Activated CD4-positive, alpha-beta T cell treated with anti-CD3 and anti-CD28 coated beads for 36 hours (primary cell): ENCODE measurements at regions of chr6 and their contacts with region 1.

Region 1: DNA sequence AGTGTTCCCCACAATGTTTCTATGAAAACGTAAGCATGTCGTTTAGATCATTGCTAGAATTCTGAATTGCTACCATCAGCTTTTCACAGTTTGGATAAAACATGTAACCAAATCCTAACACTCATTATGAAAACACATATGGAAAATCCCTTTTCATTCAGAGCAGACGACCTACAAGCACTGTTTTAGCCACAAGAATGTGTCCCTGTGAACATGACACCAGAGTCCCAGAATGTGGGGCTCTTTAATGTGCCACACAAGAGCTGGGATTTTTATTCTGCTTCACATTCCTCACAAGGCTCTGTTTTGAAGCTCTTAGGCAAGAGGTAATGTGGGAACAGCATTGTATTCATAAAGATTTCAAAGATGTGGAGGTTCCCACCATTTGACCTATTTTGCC is 141.1 kb upstream of the CITED2 start:
- DNase-seq: no peak
- ATAC-seq: peak; percentile 79
- H3K4me3 Mint-ChIP-seq: no peak overlapping the region
- H3K27ac Mint-ChIP-seq: peak overlapping the region; percentile 76
- H3K4me1 Mint-ChIP-seq: peaks cover 21% of the 10 kb centered on the region
- H3K27me3 Mint-ChIP-seq: no peaks in the 10 kb centered on the region

Region 2: DNA sequence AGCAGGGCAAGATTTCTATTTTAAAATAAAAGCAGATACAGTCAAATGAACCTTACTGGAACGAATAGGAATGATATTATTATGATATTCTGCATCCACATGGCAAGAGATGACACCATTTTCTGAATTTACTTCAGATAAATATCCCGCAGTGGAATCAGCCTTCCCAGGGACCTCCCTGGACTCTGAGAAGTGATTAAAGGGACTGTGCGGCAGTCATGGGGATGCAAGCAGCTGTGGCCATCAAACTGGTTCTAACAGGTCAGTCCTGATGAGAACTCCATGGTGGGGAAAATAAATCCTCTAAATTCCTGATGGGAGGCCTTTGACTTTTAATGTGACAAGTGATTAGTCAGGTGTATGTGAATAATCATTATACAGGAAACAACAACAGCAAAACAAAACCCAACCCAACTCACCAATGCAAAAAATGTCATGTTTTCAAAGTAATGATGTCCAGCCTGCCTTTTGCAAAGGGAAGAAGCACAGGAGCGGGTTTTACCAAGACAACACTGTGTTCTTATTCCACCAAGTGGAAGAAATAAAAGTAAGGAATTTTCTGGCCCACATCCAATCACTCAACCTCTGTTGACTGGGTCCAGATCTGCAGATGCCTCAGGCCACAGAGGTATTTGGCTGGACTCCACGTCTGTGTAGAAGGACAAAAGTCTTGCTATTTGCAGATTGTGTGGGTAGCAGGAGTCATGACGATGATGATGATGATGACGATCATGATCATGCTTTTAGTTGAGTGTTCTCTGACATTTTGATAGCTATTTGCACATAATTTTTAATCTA is 79.1 kb before region 1 on chr6:
- CTCF ChIA-PET with region 1: no interaction called
- POLR2A ChIA-PET with region 1: no interaction called
- intact Hi-C with region 1: no loop called
- DNase-seq: no peak
- ATAC-seq: no peak
- H3K4me3 Mint-ChIP-seq: no peak overlapping the region
- H3K27ac Mint-ChIP-seq: no peak overlapping the region
- H3K4me1 Mint-ChIP-seq: no peaks in the 10 kb centered on the region
- H3K27me3 Mint-ChIP-seq: no peaks in the 10 kb centered on the region

Region 3: DNA sequence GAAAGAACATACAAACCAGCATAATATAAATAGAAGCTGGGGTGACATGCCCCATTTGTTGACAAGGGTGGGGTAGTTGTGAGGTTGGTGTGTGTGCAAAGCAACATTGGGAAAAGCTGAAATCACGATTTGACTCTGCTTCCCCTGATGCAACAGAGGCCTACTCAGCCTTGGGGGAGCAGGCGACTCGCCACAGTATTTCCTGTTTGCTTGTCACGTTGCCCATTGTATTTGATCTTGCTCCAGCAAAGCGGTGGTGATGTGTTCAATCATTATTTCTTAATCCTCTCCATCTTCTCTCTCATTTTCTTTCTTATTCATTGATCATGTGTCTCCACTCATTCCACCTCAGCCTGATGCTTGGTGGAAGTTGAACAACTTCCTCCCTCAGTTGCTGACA is 24.8 kb after region 1 on chr6:
- CTCF ChIA-PET with region 1: no interaction called
- POLR2A ChIA-PET with region 1: no interaction called
- intact Hi-C with region 1: loop called in 1 of 2 experiments (anchors 1 kb)
- DNase-seq: peak; percentile 80
- ATAC-seq: peak; percentile 96
- H3K4me3 Mint-ChIP-seq: peak overlapping the region; percentile 17
- H3K27ac Mint-ChIP-seq: peak overlapping the region; percentile 35
- H3K4me1 Mint-ChIP-seq: peaks cover 37% of the 10 kb centered on the region
- H3K27me3 Mint-ChIP-seq: no peaks in the 10 kb centered on the region

Region 4: GRCh38 chr6:139600919-139601475 is 85.5 kb after region 1 on chr6:
- CTCF ChIA-PET with region 1: no interaction called
- POLR2A ChIA-PET with region 1: no interaction called
- intact Hi-C with region 1: loop called in 1 of 2 experiments (anchors 5 kb)
- DNase-seq: peak; percentile 15
- ATAC-seq: peak; percentile 93
- H3K4me3 Mint-ChIP-seq: no peak overlapping the region
- H3K27ac Mint-ChIP-seq: peak overlapping the region; percentile 33
- H3K4me1 Mint-ChIP-seq: peaks cover 10% of the 10 kb centered on the region
- H3K27me3 Mint-ChIP-seq: peaks cover 5% of the 10 kb centered on the region

Region 5: DNA sequence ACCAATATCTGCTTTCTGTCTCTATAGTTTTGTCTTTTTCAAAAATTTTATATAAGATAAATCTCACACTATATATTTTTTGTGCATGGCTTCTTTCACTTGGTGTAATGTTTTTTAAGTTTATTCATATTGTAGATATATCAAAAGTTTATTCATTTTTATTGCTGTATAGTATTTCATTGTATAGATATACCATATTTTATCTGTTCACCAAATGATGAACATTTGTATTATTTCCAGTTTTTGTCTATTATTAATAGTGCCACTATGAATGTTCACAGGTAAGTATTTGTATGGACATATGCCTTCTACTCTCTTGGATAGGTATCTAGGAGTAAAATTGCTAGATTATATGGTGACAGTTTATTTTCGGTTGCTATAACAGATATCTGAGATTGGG is 148.5 kb after region 1 on chr6:
- CTCF ChIA-PET with region 1: no interaction called
- POLR2A ChIA-PET with region 1: no interaction called
- intact Hi-C with region 1: no loop called
- DNase-seq: no peak
- ATAC-seq: no peak
- H3K4me3 Mint-ChIP-seq: no peak overlapping the region
- H3K27ac Mint-ChIP-seq: no peak overlapping the region
- H3K4me1 Mint-ChIP-seq: no peaks in the 10 kb centered on the region
- H3K27me3 Mint-ChIP-seq: peaks cover 4% of the 10 kb centered on the region

Region 6: DNA sequence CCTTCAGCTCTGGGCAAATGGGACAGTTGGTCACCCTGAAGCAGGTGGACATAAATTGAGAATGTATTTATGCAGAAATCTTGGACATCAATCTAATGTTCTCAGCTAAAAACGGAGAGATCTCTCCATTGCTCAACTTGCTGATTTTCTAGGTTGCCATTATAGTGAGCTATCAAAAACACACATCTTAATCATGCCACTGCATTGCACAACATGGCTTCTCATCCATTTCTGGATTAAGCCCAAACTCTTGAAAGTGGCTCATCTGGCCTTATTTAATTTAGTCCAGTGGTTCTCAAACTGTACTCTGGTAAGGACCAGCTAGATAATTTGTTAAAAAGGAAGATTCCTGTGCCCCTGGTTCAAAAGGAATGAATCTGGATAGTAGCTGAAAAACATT is 183.8 kb after region 1 on chr6:
- CTCF ChIA-PET with region 1: no interaction called
- POLR2A ChIA-PET with region 1: no interaction called
- intact Hi-C with region 1: no loop called
- DNase-seq: no peak
- ATAC-seq: no peak
- H3K4me3 Mint-ChIP-seq: no peak overlapping the region
- H3K27ac Mint-ChIP-seq: no peak overlapping the region
- H3K4me1 Mint-ChIP-seq: peaks cover 3% of the 10 kb centered on the region
- H3K27me3 Mint-ChIP-seq: peaks cover 2% of the 10 kb centered on the region

Region 7: DNA sequence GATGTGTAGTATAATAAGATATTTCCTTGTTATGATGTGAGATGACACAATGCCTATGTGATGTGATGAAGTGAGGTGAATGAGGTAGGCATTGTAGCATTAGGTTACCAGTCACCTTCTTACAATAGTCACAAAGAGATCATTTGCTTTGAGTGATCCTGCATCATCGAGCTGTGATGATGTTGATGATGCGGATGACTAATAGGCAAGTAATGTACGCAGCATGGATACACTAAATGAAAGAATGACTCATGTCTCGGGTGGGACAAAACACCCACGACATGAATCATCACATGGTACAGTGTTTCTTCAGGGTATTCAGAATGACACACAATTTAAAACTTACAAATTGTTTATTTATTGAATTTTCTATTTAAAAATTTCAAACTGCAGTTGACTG is 1810.9 kb after region 1 on chr6:
- CTCF ChIA-PET with region 1: no interaction called
- POLR2A ChIA-PET with region 1: no interaction called
- intact Hi-C with region 1: loop called in 1 of 2 experiments (anchors 10 kb)
- DNase-seq: peak; percentile 73
- ATAC-seq: peak; percentile 100
- H3K4me3 Mint-ChIP-seq: no peak overlapping the region
- H3K27ac Mint-ChIP-seq: no peak overlapping the region
- H3K4me1 Mint-ChIP-seq: peaks cover 19% of the 10 kb centered on the region
- H3K27me3 Mint-ChIP-seq: peaks cover 3% of the 10 kb centered on the region